ENCODE measurements at regions of chr3 and their contacts with region 1.

Region 1: DNA sequence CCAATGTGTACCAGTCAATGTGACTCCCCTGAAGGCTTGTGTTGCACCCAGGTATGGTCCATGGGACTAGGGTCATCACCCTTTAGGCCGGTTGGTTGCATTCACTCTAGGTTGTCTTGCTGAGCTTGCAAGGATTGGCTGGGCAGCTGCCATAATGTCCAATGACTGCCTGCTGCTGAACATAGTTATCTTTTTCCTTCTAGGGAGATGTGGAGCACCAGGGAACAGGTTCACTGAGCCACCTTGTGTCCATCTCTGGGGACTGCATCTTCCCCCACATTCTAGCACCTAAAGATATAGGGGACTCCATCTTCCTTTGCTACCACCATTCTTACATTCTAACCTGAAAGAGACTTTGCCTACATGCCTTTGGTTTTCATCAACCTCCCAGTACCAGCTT is 580.4 kb upstream of the TBL1XR1 start:
- DNase-seq: peak; percentile 58
- H3K4me3 ChIP-seq: no peak overlapping the region
- H3K27ac ChIP-seq: no peak overlapping the region
- H3K4me1 ChIP-seq: peaks cover 15% of the 10 kb centered on the region
- CTCF ChIP-seq: peak; percentile 76

Region 2: DNA sequence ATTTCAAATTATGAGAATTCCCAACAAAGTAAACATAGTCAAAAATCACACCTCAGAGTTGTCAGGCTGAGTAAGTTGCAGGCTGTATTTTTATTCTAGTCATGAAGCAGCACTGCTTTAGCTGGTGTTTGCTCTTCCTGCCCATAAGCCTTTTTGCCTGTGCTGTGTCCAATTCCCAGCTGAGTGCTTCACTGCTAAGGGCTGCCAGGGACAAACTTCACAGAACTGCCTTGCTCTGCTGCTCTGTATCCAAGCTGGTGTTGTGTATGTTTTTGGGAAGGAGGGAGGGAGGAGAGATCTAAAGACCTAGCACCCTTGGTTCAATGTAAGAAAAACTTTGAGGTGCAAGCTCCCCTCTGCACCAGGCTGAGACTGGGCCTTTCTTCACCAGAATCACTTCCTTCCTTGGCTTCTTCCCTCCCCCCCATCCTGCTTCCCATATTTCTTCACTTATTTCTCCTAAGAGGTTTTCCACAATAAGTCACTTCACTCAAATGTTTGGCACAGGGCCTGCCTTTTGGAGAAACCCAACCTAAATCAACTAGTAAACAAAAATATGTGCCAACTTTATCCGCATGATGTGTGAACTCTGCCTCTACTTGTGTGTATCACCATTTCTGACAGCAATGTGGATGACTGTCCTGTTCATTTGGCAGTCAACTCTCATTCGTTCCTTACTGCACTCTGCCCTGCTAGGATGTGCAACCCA is 736.5 kb before region 1 on chr3:
- CTCF ChIA-PET with region 1: no interaction called
- POLR2A ChIA-PET with region 1: no interaction called
- intact Hi-C with region 1: loop called (anchors 10 kb)
- DNase-seq: no peak
- H3K4me3 ChIP-seq: no peak overlapping the region
- H3K27ac ChIP-seq: peak overlapping the region; percentile 53
- H3K4me1 ChIP-seq: peaks cover 57% of the 10 kb centered on the region
- CTCF ChIP-seq: no peak

Region 3: DNA sequence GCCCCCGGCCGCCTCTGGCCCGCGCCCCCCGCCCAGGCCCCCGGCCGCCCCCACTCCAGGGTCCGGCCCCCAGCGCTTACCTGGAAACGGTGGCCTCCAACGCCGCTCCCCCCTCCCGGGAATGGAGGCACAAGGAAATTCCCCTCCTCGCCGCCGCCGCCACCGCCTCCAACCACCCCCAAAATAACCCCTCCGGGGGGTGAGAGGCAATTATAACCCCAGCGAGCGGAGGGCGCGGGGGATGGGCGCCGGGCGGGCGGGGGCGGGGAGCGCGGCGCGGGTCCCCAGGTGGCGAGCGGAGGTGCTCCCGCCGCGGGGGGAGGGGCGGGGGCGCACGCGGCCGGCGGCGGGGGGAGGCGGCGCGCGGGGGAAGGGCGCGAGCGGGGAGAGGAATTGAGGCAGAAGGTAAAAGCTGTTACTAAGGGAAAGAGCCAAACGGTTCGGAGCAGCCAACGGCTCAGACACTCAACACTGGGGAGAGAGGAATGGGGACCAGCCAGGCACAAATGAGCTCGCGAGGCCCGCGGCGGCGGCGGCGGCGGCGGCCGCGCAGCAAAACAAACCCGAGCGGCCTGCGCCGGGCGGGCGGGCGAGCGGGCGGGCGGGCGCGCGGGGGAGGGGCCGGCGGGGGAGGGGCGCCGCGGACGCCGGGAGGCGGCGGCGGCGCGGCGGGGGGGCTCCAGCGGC is 580.5 kb before region 1 on chr3 and contains the start of gene TBL1XR1:
- CTCF ChIA-PET with region 1: no interaction called
- POLR2A ChIA-PET with region 1: no interaction called
- intact Hi-C with region 1: loop called (anchors 10 kb)
- DNase-seq: peak; percentile 94
- H3K4me3 ChIP-seq: peak within 1 kb of the TSS; percentile 100
- H3K27ac ChIP-seq: peak within 1 kb of the TSS; percentile 95
- H3K4me1 ChIP-seq: peaks cover 56% of the 10 kb centered on the region
- CTCF ChIP-seq: no peak
- total RNA-seq, gene TBL1XR1: 103 and 121 TPM in 2 replicates

Region 4: GRCh38 chr3:177378168-177378567 is 399.5 kb before region 1 on chr3:
- CTCF ChIA-PET with region 1: no interaction called
- POLR2A ChIA-PET with region 1: no interaction called
- intact Hi-C with region 1: loop called (anchors 10 kb)
- DNase-seq: no peak
- H3K4me3 ChIP-seq: no peak overlapping the region
- H3K27ac ChIP-seq: no peak overlapping the region
- H3K4me1 ChIP-seq: peaks cover 10% of the 10 kb centered on the region
- CTCF ChIP-seq: no peak